Activated CD4-positive, alpha-beta memory T cell treated with anti-CD3 and anti-CD28 coated beads, Interleukin-2, amount 10 ng/mL, durations not matched to agents 7 days and 5 days (primary cell): ENCODE measurements at regions of chr12 and their contacts with region 1.

Region 1: GRCh38 chr12:52884526-52885293 is 20.2 kb downstream of the KRT8 start:
- DNase-seq: peak; percentile 80
- H3K4me3 Mint-ChIP-seq: no peak overlapping the region
- H3K27ac Mint-ChIP-seq: no peak overlapping the region
- H3K4me1 Mint-ChIP-seq: peaks cover 7% of the 10 kb centered on the region
- H3K27me3 Mint-ChIP-seq: peaks cover 11% of the 10 kb centered on the region

Region 2: GRCh38 chr12:52372216-52373154 is 512.2 kb before region 1 on chr12:
- CTCF ChIA-PET with region 1: interaction called, 17 read pairs
- POLR2A ChIA-PET with region 1: no interaction called
- DNase-seq: peak; percentile 66
- H3K4me3 Mint-ChIP-seq: no peak overlapping the region
- H3K27ac Mint-ChIP-seq: no peak overlapping the region
- H3K4me1 Mint-ChIP-seq: no peaks in the 10 kb centered on the region
- H3K27me3 Mint-ChIP-seq: peaks cover 32% of the 10 kb centered on the region

Region 3: GRCh38 chr12:52870351-52871290 is 14.1 kb before region 1 on chr12:
- CTCF ChIA-PET with region 1: interaction called, 72 read pairs
- POLR2A ChIA-PET with region 1: no interaction called
- DNase-seq: peak; percentile 78
- H3K4me3 Mint-ChIP-seq: no peak overlapping the region
- H3K27ac Mint-ChIP-seq: no peak overlapping the region
- H3K4me1 Mint-ChIP-seq: peaks cover 43% of the 10 kb centered on the region
- H3K27me3 Mint-ChIP-seq: no peaks in the 10 kb centered on the region

Region 4: GRCh38 chr12:52895061-52895887 is 10.6 kb after region 1 on chr12:
- CTCF ChIA-PET with region 1: interaction called, 24 read pairs
- POLR2A ChIA-PET with region 1: interaction called, 3 read pairs
- DNase-seq: no peak
- H3K4me3 Mint-ChIP-seq: no peak overlapping the region
- H3K27ac Mint-ChIP-seq: no peak overlapping the region
- H3K4me1 Mint-ChIP-seq: no peaks in the 10 kb centered on the region
- H3K27me3 Mint-ChIP-seq: peaks cover 5% of the 10 kb centered on the region

Region 5: DNA sequence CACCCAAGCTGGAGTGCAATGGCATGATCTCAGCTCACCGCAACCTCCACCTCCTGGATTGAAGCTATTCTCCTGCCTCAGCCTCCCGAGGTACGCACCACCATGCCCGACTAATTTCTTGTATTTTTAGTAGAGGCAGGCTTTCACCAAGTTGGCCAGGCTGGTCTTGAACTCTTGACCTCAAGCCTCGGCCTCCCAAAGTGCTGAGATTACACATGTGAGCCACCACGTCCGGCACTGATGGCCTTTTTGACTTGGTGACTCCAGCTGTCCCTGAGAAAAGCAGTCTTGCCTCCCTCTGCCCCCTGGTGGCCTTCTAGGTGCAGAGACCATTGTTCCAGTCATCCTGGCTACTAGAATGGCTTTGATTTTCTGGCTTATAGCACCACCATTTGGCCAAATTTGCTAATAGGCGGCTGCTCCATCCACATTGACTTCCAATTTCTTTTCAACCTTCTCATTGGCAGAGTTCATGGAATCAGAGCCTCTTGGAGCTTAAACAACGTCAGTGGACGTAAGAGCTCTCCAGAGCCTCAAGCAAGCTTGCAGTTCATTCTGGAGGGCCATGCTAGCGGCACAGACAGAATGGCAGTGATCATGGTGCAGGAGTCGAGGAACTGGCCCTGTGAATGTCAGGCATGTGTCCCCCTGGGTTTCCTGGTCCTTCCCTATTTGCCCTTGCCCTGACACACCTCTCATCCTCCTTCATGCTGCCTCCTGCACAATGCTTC is 96.1 kb after region 1 on chr12:
- CTCF ChIA-PET with region 1: interaction called, 318 read pairs
- POLR2A ChIA-PET with region 1: interaction called, 10 read pairs
- DNase-seq: peak; percentile 85
- H3K4me3 Mint-ChIP-seq: no peak overlapping the region
- H3K27ac Mint-ChIP-seq: no peak overlapping the region
- H3K4me1 Mint-ChIP-seq: peaks cover 2% of the 10 kb centered on the region
- H3K27me3 Mint-ChIP-seq: peaks cover 38% of the 10 kb centered on the region

Region 6: DNA sequence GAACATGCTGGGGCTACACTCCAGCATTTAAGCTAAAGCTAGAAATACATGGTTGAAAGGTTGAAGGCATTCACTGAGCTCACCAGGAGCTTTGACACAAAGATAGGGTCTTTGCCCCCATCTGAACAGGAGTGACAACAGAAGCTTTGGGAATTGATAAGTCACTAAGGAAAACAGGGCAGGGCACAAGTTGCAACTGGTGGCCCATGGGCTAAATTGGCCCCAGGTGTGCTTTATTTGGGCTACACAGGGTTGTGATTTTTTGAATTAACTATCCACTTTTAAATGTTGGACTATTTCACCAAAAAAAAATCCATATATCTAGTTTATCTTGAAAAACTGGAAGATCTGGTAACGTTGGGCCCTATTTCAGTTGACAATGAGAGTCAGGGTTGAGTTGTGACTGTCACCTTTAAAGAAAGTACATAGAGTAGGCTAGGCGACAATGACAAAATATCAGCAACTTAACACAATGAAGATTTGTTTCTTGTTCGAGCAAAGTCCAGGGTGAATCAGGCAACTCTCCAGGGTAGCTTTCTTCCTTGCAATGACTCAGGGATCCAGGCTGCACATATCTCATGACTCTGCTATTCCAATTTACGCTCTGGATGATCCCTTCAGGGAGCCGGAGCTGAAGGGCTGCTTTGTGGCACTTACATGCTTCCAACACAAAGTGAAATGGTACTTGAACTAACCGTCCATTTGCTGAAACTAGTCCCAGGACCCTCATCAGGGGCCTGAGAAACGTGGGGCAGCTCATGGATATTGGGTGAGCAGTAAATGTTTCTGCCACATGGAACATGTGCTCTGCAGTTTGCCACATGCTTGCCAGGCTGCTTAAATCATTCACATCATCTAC is 108.2 kb after region 1 on chr12:
- CTCF ChIA-PET with region 1: interaction called, 318 read pairs
- POLR2A ChIA-PET with region 1: interaction called, 3 read pairs
- DNase-seq: no peak
- H3K4me3 Mint-ChIP-seq: no peak overlapping the region
- H3K27ac Mint-ChIP-seq: no peak overlapping the region
- H3K4me1 Mint-ChIP-seq: no peaks in the 10 kb centered on the region
- H3K27me3 Mint-ChIP-seq: peaks cover 4% of the 10 kb centered on the region